ENCODE measurements at regions of chr5 and their contacts with region 1.

Region 1: DNA sequence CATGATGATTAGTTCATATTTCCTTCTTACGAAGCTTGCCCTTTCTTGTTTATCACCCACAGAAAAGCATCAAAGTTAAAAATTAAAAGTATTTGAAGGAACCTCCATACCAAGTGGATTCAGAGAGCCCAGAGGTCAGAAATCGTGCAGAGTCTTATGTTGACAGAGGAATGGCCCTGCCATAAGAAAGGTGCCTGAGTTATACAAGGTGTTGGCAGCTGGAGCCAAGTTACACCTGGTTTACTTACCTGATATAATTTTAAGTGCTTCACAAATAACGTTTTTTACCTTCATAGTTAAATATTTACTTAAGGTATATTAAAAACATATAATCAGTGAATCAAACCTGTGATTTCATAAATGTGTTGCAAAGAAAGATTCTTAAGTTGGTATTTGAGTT is 42.3 kb upstream of the DHFR start:
- DNase-seq: no peak
- ATAC-seq: no peak
- H3K4me3 ChIP-seq: no peak overlapping the region
- H3K4me3 Mint-ChIP-seq: no peak overlapping the region
- H3K27ac ChIP-seq: no peak overlapping the region
- H3K27ac Mint-ChIP-seq: no peak overlapping the region
- H3K4me1 ChIP-seq: no peaks in the 10 kb centered on the region
- H3K4me1 Mint-ChIP-seq: peaks cover 8% of the 10 kb centered on the region
- H3K27me3 ChIP-seq: no peaks in the 10 kb centered on the region
- H3K27me3 Mint-ChIP-seq: no peaks in the 10 kb centered on the region
- CTCF ChIP-seq: no peak

Region 2: GRCh38 chr5:80736730-80737129 is 39.6 kb after region 1 on chr5:
- CTCF ChIA-PET with region 1: no interaction called
- POLR2A ChIA-PET with region 1: no interaction called
- intact Hi-C with region 1: no loop called
- DNase-seq: no peak
- ATAC-seq: no peak
- H3K4me3 ChIP-seq: no peak overlapping the region
- H3K4me3 Mint-ChIP-seq: no peak overlapping the region
- H3K27ac ChIP-seq: no peak overlapping the region
- H3K27ac Mint-ChIP-seq: no peak overlapping the region
- H3K4me1 ChIP-seq: no peaks in the 10 kb centered on the region
- H3K4me1 Mint-ChIP-seq: peaks cover 22% of the 10 kb centered on the region
- H3K27me3 ChIP-seq: no peaks in the 10 kb centered on the region
- H3K27me3 Mint-ChIP-seq: no peaks in the 10 kb centered on the region
- CTCF ChIP-seq: no peak

Region 3: DNA sequence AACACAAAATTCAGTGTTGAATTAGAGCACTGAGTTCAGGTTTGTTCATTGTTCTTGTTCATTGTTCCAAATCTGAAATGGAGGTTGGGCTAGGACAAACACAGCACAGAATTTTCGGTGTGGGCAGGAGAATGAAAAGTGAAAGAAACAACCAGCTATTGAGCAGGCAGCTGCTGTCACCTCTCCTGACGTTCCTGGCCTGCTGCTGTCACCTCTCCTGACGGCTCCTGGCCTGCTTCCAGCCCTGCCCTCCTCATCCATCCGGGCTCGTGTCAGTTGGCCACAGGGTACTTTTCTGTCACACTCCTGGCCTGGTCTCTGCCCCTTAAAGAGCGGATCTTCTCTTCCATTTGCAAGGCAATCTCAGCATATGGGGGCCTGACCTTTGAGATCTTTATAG is 490.8 kb after region 1 on chr5:
- CTCF ChIA-PET with region 1: no interaction called
- POLR2A ChIA-PET with region 1: no interaction called
- intact Hi-C with region 1: loop called in 1 of 2 experiments (anchors 5 kb)
- DNase-seq: no peak
- ATAC-seq: no peak
- H3K4me3 ChIP-seq: no peak overlapping the region
- H3K4me3 Mint-ChIP-seq: no peak overlapping the region
- H3K27ac ChIP-seq: no peak overlapping the region
- H3K27ac Mint-ChIP-seq: peak overlapping the region; percentile 82
- H3K4me1 ChIP-seq: no peaks in the 10 kb centered on the region
- H3K4me1 Mint-ChIP-seq: peaks cover 3% of the 10 kb centered on the region
- H3K27me3 ChIP-seq: no peaks in the 10 kb centered on the region
- H3K27me3 Mint-ChIP-seq: no peaks in the 10 kb centered on the region
- CTCF ChIP-seq: no peak